Uterus (tissue), 4 donors: ENCODE measurements at regions of chr15 and their contacts with region 1.

Region 1: DNA sequence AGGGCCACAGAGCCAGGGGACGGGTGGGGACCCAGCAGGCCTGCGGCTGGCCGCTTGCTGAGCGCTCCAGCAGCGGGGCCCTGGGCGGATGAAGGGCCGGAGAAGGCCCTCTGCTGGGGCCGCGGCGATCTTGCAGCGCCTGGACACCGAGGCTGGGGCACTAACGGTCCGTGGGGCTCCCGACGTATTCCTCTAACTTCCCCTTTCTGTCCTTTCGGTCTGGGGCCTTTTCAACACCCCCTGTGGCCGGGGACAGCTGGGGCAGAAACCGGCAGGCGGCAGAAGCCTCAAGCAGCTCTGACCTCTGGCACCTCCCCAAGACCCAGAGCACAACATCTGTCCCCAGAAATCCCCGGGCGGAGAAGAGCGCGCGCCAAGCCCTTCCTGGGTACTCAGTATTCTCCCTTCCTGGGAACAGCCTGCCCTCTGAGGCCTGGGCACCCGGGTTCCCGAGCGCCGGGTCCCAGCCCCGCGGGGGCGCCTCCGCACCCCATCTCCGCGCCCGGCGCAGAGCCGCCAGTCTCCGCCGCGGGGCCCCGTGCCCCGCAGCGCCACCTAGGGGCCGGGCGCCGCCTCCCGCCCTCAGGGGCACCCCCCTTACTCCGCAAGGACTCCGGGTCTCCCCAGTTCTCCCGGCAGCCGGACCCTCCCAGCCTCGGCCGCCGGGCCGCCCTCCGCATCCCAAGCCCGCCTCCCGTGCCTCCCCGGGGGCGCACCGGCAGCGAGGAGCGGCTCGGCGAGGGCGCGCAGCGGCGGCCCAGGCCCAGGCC is 582 bp upstream of the SLCO3A1 start:
- DNase-seq: peak; percentile 72 to 73
- H3K4me3 ChIP-seq: peak overlapping the region; percentile 55 to 84
- H3K27ac ChIP-seq: peak overlapping the region; percentile 97 to 98
- H3K4me1 ChIP-seq: peaks cover 5 to 7% of the 10 kb centered on the region in 2 donors
- H3K27me3 ChIP-seq: no peaks in the 10 kb centered on the region
- CTCF ChIP-seq: peak; percentile 58 to 84 (median 74)
- POLR2A ChIP-seq: no peak

Region 2: DNA sequence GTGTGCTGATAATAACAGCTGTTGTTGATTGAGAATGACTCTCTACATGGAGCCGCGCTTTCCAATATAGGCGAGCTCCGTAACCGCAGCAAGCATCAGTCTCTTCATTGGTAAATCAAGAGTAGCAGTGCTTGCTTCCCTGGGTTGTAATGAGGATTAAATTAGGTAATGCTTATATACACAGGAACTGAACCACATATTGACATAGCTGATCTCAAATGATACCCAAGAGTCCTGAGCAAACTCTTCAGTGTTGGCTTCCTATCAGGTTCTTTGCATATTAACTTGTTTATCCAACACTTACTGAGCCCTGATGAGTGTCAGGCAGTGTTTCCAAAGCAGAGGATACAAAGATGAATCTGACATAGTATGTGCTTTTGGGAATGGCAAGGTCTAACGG is 45.8 kb before region 1 on chr15:
- intact Hi-C with region 1: no loop called
- DNase-seq: no peak
- H3K4me3 ChIP-seq: no peak overlapping the region
- H3K27ac ChIP-seq: no peak overlapping the region
- H3K4me1 ChIP-seq: no peaks in the 10 kb centered on the region
- H3K27me3 ChIP-seq: no peaks in the 10 kb centered on the region
- CTCF ChIP-seq: no peak
- POLR2A ChIP-seq: no peak

Region 3: DNA sequence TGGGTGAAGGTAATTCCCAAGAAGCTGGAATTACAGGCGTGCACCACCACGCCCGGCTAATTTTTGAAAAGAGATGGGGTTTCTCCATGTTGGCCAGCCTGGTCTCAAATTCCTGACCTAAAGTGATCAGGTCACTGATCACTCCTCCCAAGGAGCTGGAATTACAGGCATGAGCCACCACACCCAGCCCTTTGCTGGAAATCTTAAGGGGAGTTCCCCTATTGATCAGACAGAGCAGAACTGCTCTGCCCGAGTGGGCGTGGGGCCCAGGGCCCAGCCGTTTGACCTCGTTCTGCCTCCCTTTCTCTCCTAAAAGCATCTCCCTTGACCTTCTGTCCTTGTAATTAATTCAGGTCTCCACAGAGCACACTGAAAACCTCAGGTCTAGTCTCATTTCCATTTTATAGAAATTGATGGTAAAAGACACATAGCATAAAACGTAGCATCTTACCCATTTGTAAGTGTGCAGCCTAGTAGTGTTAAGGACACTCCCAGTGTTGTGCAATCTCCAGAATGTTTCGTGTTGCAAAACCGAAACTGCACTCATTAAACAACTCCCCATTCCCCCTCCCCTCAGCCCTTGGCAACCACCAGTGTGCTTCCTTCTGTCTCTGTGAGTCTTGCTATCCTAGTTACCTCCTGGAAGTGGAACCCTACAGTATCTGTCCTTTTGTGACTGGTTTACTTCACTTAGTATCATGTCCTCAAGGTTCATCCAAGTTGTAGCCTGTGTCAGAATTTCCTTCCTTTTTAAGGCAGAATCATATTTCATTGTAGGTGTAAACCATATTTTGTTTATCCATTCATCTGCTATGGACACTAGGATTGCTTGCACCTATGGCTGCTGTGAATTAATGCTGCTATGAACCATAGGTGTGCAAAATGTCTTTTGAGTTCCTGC is 90.0 kb after region 1 on chr15:
- intact Hi-C with region 1: loop called (anchors 10 kb)
- DNase-seq: peak; percentile 84 to 92
- H3K4me3 ChIP-seq: peak overlapping the region in 1 of 2 donors; percentile 12
- H3K27ac ChIP-seq: peak overlapping the region; percentile 59 to 71
- H3K4me1 ChIP-seq: peaks cover 5 to 6% of the 10 kb centered on the region in 2 donors
- H3K27me3 ChIP-seq: no peaks in the 10 kb centered on the region
- CTCF ChIP-seq: no peak
- POLR2A ChIP-seq: peak in 1 of 2 donors; percentile 16

Region 4: GRCh38 chr15:92077353-92078085 is 224.6 kb after region 1 on chr15:
- intact Hi-C with region 1: loop called (anchors 5 kb)
- DNase-seq: peak; percentile 65 to 70
- H3K4me3 ChIP-seq: no peak overlapping the region
- H3K27ac ChIP-seq: no peak overlapping the region
- H3K4me1 ChIP-seq: no peaks in the 10 kb centered on the region
- H3K27me3 ChIP-seq: no peaks in the 10 kb centered on the region
- CTCF ChIP-seq: peak; percentile 65 to 81 (median 70)
- POLR2A ChIP-seq: no peak